Activated CD8-positive, alpha-beta T cell treated with anti-CD3 and anti-CD28 coated beads for 36 hours (primary cell): ENCODE measurements at regions of chr18 and their contacts with region 1.

Region 1: GRCh38 chr18:69935319-69936190 is 12.1 kb downstream of the CD226 start:
- DNase-seq: peak; percentile 97
- ATAC-seq: peak; percentile 95
- H3K4me3 Mint-ChIP-seq: no peak overlapping the region
- H3K27ac Mint-ChIP-seq: no peak overlapping the region
- H3K4me1 Mint-ChIP-seq: peaks cover 38% of the 10 kb centered on the region
- H3K27me3 Mint-ChIP-seq: no peaks in the 10 kb centered on the region
- CTCF ChIP-seq: no peak

Region 2: DNA sequence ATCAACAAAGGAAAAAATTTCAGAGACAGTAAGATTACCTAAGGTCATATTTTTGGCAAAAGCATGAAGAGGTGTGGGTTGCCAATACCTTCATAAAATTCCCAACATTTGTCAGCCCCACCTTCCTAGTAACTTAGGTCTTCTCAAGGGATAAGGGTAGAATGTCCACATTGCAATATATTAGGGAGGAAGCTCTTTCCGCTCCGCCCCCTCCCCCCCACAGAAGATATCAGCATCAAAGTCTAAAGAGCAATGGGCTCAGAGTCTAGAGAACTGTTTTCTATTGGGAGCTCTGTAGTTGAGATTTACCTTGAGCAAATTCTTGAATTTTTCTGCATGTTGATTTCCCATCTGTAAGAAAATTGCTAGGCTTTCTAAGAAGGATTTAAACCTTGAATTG is 188.2 kb before region 1 on chr18:
- CTCF ChIA-PET with region 1: no interaction called
- POLR2A ChIA-PET with region 1: no interaction called
- intact Hi-C with region 1: no loop called
- DNase-seq: no peak
- ATAC-seq: no peak
- H3K4me3 Mint-ChIP-seq: no peak overlapping the region
- H3K27ac Mint-ChIP-seq: no peak overlapping the region
- H3K4me1 Mint-ChIP-seq: no peaks in the 10 kb centered on the region
- H3K27me3 Mint-ChIP-seq: no peaks in the 10 kb centered on the region
- CTCF ChIP-seq: no peak

Region 3: DNA sequence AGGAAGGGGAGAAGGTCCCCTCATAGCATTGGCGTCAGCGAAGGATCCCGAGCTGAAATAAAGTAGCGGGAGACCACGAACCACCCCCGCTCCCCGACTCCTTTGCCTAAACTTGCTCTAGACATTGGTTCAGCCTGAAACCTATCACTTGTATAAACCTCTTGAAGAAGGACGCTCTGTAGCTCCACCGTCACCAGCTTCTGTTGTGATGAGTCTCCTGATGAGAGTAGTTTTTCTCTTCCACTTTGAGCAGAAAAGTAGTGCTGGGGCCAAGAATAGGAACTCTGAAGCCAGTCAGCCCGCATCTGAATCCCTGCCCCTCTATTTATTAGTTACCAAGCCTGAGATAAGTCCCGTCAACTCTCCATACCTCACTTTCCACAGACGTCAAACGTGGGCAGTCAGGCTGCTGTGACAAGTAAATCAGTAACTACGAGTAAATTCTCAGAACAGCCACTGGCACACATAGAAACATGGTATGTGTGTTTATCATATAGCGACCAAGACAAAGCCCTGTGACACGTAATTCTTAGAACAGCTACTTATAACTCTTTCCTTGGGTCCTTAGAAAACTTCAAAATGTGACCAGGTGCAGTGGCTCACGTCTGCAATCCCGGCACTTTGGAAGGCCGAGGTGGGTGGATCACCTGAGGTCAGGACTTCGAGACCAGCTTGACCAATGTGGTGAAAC is 49.6 kb before region 1 on chr18:
- CTCF ChIA-PET with region 1: interaction called, 5 read pairs
- POLR2A ChIA-PET with region 1: interaction called, 14 read pairs
- intact Hi-C with region 1: loop called (anchors 2 kb)
- DNase-seq: peak; percentile 80
- ATAC-seq: peak; percentile 69
- H3K4me3 Mint-ChIP-seq: peak overlapping the region; percentile 59
- H3K27ac Mint-ChIP-seq: peak overlapping the region; percentile 95
- H3K4me1 Mint-ChIP-seq: peaks cover 70% of the 10 kb centered on the region
- H3K27me3 Mint-ChIP-seq: no peaks in the 10 kb centered on the region
- CTCF ChIP-seq: no peak

Region 4: DNA sequence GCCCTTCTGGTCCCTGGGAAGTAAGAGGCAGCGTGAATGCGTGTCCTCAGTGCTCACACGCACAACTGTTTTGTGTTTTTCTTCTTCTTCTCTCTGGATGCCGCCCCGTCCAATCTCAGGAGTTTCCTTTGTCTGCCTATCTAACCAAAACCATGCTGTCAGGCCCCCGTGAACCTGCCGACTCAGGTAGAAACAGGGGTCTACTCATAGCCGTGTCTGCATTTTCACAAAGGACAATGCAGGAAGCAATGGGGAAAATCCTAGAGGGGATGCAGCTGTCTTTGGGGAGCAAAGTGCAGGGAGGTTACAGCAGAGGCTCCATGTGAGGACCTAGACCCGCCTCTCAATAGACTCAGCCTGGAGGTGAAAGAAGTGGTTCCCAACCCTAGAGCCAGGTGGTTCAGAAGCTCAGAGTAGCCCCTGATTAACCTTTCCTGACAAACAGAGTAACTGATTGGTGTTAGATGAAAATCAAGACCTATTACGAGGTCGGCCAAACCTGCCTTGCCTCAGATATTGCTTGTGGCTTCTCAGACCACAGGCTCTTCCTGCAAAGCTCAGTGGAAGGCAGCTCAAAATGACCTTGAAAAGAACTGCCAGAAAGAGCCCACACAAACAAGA is 37.2 kb before region 1 on chr18:
- CTCF ChIA-PET with region 1: interaction called, 8 read pairs
- POLR2A ChIA-PET with region 1: interaction called, 31 read pairs
- intact Hi-C with region 1: loop called (anchors 2 kb)
- DNase-seq: peak; percentile 55
- ATAC-seq: peak; percentile 32
- H3K4me3 Mint-ChIP-seq: peak overlapping the region; percentile 71
- H3K27ac Mint-ChIP-seq: peak overlapping the region; percentile 94
- H3K4me1 Mint-ChIP-seq: peaks cover 64% of the 10 kb centered on the region
- H3K27me3 Mint-ChIP-seq: no peaks in the 10 kb centered on the region
- CTCF ChIP-seq: no peak

Region 5: DNA sequence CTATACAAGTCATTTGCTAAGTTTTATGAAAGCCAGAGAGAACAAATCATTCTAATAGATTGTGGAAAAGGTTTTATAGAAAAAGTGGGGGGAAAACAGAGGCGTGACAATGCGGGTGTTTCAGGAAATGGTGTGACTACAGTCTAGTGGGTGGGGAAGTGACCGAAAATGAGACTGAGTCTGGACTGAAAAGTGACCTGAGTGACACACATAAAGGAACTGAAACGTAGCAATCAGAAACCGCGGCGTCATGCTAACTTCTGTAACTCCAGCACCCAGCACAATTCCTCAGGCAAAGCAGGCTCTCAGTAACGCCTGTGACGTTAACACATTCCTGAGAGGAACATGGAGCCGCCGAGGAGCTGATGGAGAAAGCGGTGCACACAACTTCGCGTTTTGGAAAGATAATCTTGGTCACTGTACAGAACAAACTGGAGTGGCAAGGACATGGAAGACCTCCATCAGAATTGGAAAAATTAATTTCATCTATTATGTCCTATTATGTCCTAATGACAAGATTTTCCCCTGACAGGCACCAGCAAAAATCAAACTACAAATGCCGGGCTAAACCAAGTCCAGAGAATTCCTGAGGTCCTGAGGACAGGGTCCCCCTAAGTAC is 13.5 kb after region 1 on chr18:
- CTCF ChIA-PET with region 1: interaction called, 11 read pairs
- POLR2A ChIA-PET with region 1: interaction called, 42 read pairs
- intact Hi-C with region 1: loop called (anchors 1 kb)
- DNase-seq: peak; percentile 83
- ATAC-seq: peak; percentile 43
- H3K4me3 Mint-ChIP-seq: no peak overlapping the region
- H3K27ac Mint-ChIP-seq: no peak overlapping the region
- H3K4me1 Mint-ChIP-seq: peaks cover 37% of the 10 kb centered on the region
- H3K27me3 Mint-ChIP-seq: no peaks in the 10 kb centered on the region
- CTCF ChIP-seq: no peak

Region 6: DNA sequence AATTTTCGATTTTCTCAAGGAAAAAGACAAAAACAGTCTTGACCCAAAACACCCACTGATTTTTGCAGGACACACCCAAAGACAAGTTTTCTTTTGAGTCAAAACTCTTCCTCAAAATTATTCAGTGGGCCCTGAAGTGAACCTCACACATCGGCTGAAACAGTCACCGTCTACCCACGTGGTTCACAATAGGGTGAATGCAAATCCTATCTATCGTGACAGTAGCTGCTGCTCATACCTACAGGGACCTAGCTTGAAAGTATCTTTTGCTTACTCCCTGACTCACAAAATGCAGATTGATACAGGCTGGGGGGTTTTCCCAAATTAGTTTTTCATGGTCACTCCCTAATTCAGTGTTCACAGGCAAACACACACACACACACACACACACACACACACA is 22.9 kb after region 1 on chr18:
- CTCF ChIA-PET with region 1: interaction called, 7 read pairs
- POLR2A ChIA-PET with region 1: interaction called, 14 read pairs
- intact Hi-C with region 1: no loop called
- DNase-seq: peak; percentile 61
- ATAC-seq: peak; percentile 84
- H3K4me3 Mint-ChIP-seq: no peak overlapping the region
- H3K27ac Mint-ChIP-seq: peak overlapping the region; percentile 40
- H3K4me1 Mint-ChIP-seq: peaks cover 7% of the 10 kb centered on the region
- H3K27me3 Mint-ChIP-seq: no peaks in the 10 kb centered on the region
- CTCF ChIP-seq: no peak

Region 7: GRCh38 chr18:70004696-70005095 is 69.1 kb after region 1 on chr18:
- CTCF ChIA-PET with region 1: no interaction called
- POLR2A ChIA-PET with region 1: no interaction called
- intact Hi-C with region 1: no loop called
- DNase-seq: no peak
- ATAC-seq: no peak
- H3K4me3 Mint-ChIP-seq: no peak overlapping the region
- H3K27ac Mint-ChIP-seq: no peak overlapping the region
- H3K4me1 Mint-ChIP-seq: no peaks in the 10 kb centered on the region
- H3K27me3 Mint-ChIP-seq: no peaks in the 10 kb centered on the region
- CTCF ChIP-seq: no peak

Region 8: GRCh38 chr18:70015127-70015526 is 79.6 kb after region 1 on chr18:
- CTCF ChIA-PET with region 1: no interaction called
- POLR2A ChIA-PET with region 1: no interaction called
- intact Hi-C with region 1: no loop called
- DNase-seq: no peak
- ATAC-seq: no peak
- H3K4me3 Mint-ChIP-seq: no peak overlapping the region
- H3K27ac Mint-ChIP-seq: no peak overlapping the region
- H3K4me1 Mint-ChIP-seq: no peaks in the 10 kb centered on the region
- H3K27me3 Mint-ChIP-seq: no peaks in the 10 kb centered on the region
- CTCF ChIP-seq: no peak